ENCODE measurements at regions of chr6 and their contacts with region 1.

Region 1: GRCh38 chr6:53171605-53172446 is 23.2 kb upstream of the GCM1 start:
- DNase-seq: peak; percentile 91
- H3K4me3 Mint-ChIP-seq: no peak overlapping the region
- H3K27ac Mint-ChIP-seq: no peak overlapping the region
- H3K4me1 Mint-ChIP-seq: no peaks in the 10 kb centered on the region
- H3K27me3 Mint-ChIP-seq: peaks cover 3% of the 10 kb centered on the region

Region 2: DNA sequence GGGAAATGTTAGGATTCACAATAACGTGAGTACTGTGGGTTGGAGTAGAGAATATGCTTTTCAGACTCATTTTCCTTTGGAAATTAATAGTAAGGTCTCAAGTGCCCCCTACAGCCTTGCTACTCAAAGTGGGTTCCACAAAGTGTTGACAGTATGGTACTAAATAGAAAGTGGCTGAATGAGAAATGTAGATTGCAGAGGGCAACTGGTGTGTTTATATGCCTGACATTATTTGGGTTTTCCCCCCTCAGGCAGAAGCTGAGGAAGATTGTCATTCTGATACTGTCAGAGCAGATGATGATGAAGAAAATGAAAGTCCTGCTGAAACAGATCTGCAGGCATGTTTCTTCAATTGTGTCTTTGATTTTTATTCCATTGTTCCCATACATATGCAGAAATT is 101.0 kb before region 1 on chr6:
- CTCF ChIA-PET with region 1: no interaction called
- POLR2A ChIA-PET with region 1: no interaction called
- DNase-seq: no peak
- H3K4me3 Mint-ChIP-seq: no peak overlapping the region
- H3K27ac Mint-ChIP-seq: no peak overlapping the region
- H3K4me1 Mint-ChIP-seq: peaks cover 30% of the 10 kb centered on the region
- H3K27me3 Mint-ChIP-seq: no peaks in the 10 kb centered on the region

Region 3: DNA sequence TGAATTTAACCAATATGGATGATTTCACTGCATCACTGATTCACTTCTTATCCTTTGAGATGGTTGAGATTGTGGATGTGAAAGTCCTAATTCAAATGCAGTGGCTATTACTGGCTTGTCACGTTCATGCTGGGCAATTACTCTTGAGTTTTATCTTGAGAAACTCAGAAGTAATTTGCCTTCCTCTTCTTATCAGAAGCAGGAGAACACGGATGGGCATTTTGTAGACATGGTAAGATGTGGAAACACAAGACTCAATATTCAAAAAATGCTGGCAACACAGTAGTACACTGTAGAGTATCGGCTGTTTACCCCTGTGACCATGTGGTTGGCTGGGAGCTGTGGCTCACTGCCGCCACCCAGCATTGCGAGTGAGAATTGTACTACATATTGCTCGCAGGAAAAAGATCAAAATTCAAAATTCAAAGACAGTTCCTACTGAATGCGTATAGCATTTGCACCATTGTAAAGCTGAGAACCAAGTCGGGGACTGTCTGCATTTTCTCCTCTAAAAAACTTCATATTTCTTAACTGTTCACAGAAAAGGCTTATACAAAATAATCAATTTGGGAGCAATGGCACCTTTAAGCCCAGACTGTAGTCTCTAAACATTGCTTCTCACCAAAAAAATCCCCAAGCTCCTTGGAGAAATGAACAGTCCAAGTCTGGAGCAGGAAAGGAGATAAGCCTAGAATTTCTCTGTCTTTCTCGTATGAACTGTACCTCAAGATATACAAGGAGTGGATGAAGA is 238.9 kb after region 1 on chr6:
- CTCF ChIA-PET with region 1: interaction called, 13 read pairs
- POLR2A ChIA-PET with region 1: no interaction called
- DNase-seq: peak; percentile 63
- H3K4me3 Mint-ChIP-seq: no peak overlapping the region
- H3K27ac Mint-ChIP-seq: no peak overlapping the region
- H3K4me1 Mint-ChIP-seq: peaks cover 4% of the 10 kb centered on the region
- H3K27me3 Mint-ChIP-seq: no peaks in the 10 kb centered on the region

Region 4: GRCh38 chr6:53426667-53427270 is 254.9 kb after region 1 on chr6:
- CTCF ChIA-PET with region 1: interaction called, 10 read pairs
- POLR2A ChIA-PET with region 1: no interaction called
- DNase-seq: no peak
- H3K4me3 Mint-ChIP-seq: no peak overlapping the region
- H3K27ac Mint-ChIP-seq: no peak overlapping the region
- H3K4me1 Mint-ChIP-seq: peaks cover 15% of the 10 kb centered on the region
- H3K27me3 Mint-ChIP-seq: peaks cover 7% of the 10 kb centered on the region

Region 5: DNA sequence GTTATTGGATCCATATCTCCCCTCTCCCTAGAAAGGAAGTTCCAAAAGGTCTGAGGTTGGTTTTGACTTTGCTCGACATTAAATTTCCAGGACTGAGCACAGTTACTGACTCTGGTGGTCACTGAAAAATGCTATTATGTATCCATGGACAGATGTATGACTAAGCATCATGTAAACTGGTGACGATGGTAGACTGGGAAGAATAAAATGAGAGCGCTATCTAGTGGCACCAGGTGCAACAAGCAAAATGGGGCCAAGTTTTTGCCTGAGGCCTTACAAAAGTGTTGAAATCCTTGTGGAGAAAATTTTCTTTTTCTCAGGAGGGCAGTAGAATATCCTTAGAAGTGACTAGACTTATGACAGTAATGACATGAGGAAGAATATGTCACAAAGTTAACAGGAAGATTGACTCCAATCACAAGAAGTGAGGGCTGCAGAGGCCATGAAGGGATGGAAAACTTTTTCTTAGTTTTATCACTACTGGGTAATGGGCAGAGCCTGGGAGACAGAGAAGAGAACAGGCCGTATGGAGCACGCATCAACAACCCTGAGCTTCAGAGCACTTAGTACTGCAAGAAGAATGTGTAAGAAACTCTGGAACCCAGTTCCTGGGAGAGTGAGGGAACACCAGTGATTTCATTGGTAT is 265.9 kb after region 1 on chr6:
- CTCF ChIA-PET with region 1: interaction called, 15 read pairs
- POLR2A ChIA-PET with region 1: no interaction called
- DNase-seq: peak; percentile 14
- H3K4me3 Mint-ChIP-seq: no peak overlapping the region
- H3K27ac Mint-ChIP-seq: no peak overlapping the region
- H3K4me1 Mint-ChIP-seq: peaks cover 1% of the 10 kb centered on the region
- H3K27me3 Mint-ChIP-seq: peaks cover 8% of the 10 kb centered on the region

Region 6: DNA sequence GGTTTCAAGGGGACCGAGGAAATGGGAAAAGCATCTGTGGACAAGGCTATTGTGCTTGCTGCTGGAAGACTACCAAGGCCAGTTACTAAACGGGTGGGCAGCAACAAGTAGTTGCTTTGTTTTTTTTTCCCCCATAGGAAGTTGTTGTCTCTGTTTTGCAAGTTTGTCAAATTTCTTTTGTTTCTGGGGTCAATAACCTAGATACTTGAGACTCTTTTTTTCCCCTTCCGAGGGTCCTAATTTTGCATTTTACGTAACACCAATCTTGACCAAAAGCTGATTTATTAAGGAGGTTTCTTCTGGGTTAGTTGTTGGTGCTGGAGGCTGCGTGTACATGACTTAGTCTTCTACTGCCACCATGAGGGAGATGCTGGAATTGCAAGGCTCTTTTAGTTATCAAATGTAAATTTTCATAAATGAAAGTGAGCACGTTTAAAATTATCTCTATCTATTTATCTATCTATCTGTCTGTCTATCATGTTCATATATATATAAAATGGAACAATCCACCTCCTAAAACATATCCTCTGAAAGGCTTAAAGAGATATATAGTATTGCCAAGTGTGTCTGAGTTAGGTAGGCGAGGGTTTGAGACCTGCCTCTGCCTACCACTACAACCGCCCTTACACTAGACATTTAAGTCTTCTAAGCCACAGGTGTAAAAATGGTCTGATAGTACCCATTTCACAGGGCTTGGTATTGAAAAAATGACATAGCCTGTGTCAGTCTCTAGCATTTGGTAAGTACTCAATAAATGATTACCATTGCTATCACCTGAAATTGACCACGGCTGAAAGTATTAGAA is 312.9 kb after region 1 on chr6:
- CTCF ChIA-PET with region 1: interaction called, 11 read pairs
- POLR2A ChIA-PET with region 1: no interaction called
- DNase-seq: peak; percentile 79
- H3K4me3 Mint-ChIP-seq: no peak overlapping the region
- H3K27ac Mint-ChIP-seq: no peak overlapping the region
- H3K4me1 Mint-ChIP-seq: peaks cover 21% of the 10 kb centered on the region
- H3K27me3 Mint-ChIP-seq: peaks cover 23% of the 10 kb centered on the region